Activated T-helper 1 cell treated with anti-CD3 and anti-CD28 coated beads, Interleukin-12 subunit alpha, Interleukin-12 subunit beta, Interleukin-2, Interleukin-4 antibody, amounts not matched to agents 30 ng/mL and 10 ng/mL and 1 ng/mL, durations not matched to agents 14 hours and 24 hours and 36 hours (primary cell): ENCODE measurements at regions of chr20 and their contacts with region 1.

Region 1: DNA sequence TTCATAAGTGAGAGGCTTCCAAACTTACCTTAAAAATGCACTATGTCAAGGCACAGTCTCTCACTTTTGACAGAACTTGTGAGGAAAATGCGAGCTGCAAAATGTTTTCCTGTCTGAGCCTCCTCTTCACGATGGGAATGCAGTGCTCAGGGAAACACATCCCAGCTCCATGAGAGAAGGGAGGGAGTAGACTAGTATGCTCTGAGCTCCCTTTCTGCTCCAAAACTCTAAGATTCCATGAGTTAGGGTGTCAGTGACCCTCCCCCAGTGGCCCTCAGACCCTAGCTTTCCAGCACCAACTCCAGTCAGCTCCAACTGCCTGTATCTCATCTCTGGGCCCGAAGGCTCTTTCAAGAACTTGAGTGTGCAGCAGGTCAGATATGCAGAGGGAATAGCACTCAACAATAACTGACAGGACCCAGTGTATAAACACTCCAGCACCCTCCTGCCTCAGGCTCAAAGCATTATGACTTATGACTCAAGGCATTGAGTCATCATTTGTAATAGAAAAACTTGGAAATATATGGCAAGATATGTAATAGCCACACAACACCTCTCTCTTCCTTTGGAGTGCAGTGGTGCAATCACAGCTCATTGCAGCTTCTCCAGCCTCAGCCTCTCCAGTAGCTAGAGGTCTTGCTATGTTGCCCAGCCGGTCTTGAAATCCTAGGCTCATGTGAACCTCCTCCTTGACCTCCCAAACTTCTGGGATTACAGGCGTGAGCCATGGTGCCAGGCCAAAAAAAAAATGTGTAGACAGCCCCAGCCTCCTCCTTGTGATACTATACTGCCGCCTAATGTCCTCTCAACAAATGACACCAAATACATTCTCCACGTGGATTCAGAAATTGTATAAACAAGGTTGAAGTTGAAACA is 16.7 kb upstream of the ENTPD6 start:
- DNase-seq: no peak
- H3K4me3 Mint-ChIP-seq: no peak overlapping the region
- H3K27ac Mint-ChIP-seq: no peak overlapping the region
- H3K4me1 Mint-ChIP-seq: no peaks in the 10 kb centered on the region
- H3K27me3 Mint-ChIP-seq: peaks cover 30% of the 10 kb centered on the region

Region 2: DNA sequence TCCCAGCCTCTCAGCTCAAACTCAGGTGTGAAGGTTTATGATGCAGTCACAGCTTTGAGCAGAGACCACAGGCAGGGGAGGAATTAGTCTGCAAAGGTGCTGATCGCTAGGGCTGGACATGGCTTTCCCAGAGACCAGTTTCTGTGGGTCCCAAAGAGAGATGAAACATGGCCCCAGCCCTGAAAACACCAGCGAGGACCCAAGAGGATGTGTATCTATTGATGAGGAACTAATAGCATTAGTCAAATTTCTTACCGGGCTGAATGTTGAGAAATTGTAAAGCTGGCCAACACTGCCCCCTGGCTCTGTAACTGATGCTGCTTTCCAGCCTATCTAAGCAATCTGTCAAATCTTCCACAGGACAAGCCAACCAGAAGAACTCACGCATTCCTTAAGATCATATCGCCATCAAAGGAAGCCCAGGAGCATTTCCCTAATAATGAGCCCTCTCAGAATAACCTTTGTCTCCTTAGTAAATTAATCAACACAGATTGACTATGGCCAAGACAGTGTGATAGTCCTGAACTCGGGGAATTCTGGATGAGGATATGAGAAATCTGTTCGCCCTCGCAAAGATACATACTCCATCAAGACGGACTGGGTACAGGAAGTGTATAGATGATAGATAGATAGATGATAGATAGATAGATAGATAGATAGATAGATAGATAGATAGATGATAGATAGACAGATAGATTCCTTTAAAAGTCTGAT is 113.0 kb before region 1 on chr20:
- intact Hi-C with region 1: loop called (anchors 2 kb)
- DNase-seq: peak; percentile 21
- H3K4me3 Mint-ChIP-seq: no peak overlapping the region
- H3K27ac Mint-ChIP-seq: no peak overlapping the region
- H3K4me1 Mint-ChIP-seq: peaks cover 4% of the 10 kb centered on the region
- H3K27me3 Mint-ChIP-seq: peaks cover 53% of the 10 kb centered on the region

Region 3: GRCh38 chr20:25081065-25081729 is 97.6 kb before region 1 on chr20:
- intact Hi-C with region 1: loop called (anchors 1 kb)
- DNase-seq: no peak
- H3K4me3 Mint-ChIP-seq: no peak overlapping the region
- H3K27ac Mint-ChIP-seq: no peak overlapping the region
- H3K4me1 Mint-ChIP-seq: peaks cover 9% of the 10 kb centered on the region
- H3K27me3 Mint-ChIP-seq: peaks cover 77% of the 10 kb centered on the region